ENCODE measurements at regions of chr17 and their contacts with region 1.

Region 1: DNA sequence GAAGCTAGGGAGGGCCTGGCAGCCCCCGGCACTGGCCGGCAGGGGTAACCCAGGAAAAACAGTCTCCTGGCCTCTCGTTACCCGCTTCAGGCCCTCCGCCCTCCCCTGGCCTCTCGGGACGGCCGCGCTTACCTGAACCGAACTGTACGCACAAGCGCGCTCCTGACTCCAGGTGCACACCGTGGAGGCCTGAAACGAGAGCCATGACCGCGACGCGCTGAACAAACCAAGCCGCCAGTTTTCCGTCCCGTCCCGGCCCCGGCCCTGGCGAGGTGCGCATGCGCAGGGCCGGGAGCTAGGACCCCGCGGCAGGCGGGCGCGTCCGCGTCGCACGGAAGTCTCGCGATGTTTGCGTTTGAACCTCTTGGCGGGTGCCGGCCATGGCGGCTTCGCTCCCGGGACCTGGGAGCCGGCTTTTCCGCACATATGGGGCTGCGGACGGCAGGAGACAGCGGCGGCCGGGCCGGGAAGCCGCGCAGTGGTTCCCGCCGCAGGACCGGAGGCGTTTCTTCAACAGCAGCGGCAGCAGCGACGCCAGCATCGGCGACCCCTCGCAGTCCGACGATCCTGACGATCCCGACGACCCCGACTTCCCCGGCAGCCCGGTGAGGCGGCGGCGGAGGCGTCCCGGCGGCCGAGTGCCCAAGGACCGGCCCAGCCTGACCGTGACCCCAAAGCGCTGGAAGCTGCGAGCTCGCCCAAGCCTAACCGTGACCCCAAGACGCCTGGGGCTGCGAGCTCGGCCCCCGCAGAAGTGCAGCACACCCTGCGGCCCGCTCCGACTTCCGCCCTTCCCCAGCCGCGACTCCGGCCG is at the start of gene HASPIN:
- DNase-seq: peak; percentile 84 to 95 (median 90)
- ATAC-seq: peak; percentile 92 to 96
- H3K4me3 Mint-ChIP-seq: peak within 1 kb of the TSS; percentile 80 to 96 (median 92)
- H3K27ac Mint-ChIP-seq: peak within 1 kb of the TSS; percentile 83 to 96 (median 92)
- H3K4me1 Mint-ChIP-seq: peaks cover 17 to 54% (median 41%) of the 10 kb centered on the region in 4 donors
- H3K27me3 Mint-ChIP-seq: no peaks in the 10 kb centered on the region
- polyA plus RNA-seq, gene HASPIN: 0.13 to 0.28 TPM in 2 of 3 donors, not detected in the other

Region 2: GRCh38 chr17:3626831-3627768 is 96.7 kb before region 1 on chr17:
- POLR2A ChIA-PET with region 1: no interaction called
- DNase-seq: no peak
- ATAC-seq: no peak
- H3K4me3 Mint-ChIP-seq: no peak overlapping the region
- H3K27ac Mint-ChIP-seq: no peak overlapping the region
- H3K4me1 Mint-ChIP-seq: peaks cover 0 to 5% (median 2%) of the 10 kb centered on the region in 4 donors
- H3K27me3 Mint-ChIP-seq: no peaks in the 10 kb centered on the region

Region 3: DNA sequence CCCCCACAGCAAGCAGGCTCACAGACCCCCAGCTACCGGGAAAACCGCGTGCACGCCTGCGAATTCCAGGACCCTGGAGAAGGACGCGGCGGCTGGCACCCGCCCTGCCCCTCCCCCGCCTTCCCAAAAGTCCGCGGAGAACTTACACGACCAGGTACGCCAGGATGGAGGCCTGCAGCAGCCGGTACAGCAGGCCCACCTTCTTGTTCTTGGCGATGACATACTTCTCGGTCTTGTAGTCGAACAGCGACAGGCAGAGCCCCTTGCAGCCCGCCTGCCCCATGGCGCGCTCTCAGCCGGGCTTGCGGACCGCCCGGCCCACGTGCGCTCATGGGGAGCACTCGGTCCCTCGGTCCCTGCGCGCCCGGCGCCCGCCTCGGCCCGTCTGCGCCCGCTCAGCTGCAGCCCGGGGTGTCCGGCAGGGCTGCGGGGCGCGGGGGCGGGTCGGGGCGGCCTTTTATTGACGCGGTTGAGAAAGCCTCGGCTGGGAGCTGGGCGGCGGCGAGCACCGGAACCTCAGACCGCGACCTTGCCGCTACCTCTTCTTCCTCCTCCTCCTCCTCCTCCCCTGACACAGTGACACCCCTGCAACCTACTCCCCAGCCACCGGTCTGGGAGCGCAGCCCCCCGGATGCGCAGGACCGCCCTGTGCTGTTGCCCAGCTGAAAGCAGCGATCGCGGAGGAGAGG is 27.9 kb before region 1 on chr17 and contains the start of gene P2RX5:
- POLR2A ChIA-PET with region 1: interaction called, 12 read pairs
- DNase-seq: peak in 9 of 10 donors; percentile 5 to 49 (median 31)
- ATAC-seq: peak; percentile 80 to 84
- H3K4me3 Mint-ChIP-seq: peak within 1 kb of the TSS; percentile 88 to 99 (median 92)
- H3K27ac Mint-ChIP-seq: peak within 1 kb of the TSS; percentile 63 to 97 (median 89)
- H3K4me1 Mint-ChIP-seq: peaks cover 8 to 51% (median 37%) of the 10 kb centered on the region in 4 donors
- H3K27me3 Mint-ChIP-seq: no peaks in the 10 kb centered on the region
- polyA plus RNA-seq, gene P2RX5: 15.6 to 23.6 (median 16.7) TPM

Region 4: GRCh38 chr17:3710951-3711383 is 12.8 kb before region 1 on chr17:
- POLR2A ChIA-PET with region 1: interaction called, 25 read pairs
- DNase-seq: peak in 9 of 10 donors; percentile 66 to 86 (median 74)
- ATAC-seq: peak; percentile 99
- H3K4me3 Mint-ChIP-seq: peak overlapping the region in 9 of 10 donors; percentile 26 to 79 (median 63)
- H3K27ac Mint-ChIP-seq: peak overlapping the region in 9 of 10 donors; percentile 77 to 91 (median 88)
- H3K4me1 Mint-ChIP-seq: peaks cover 14 to 51% (median 37%) of the 10 kb centered on the region in 4 donors
- H3K27me3 Mint-ChIP-seq: no peaks in the 10 kb centered on the region

Region 5: GRCh38 chr17:3870871-3871306 is 147.1 kb after region 1 on chr17:
- POLR2A ChIA-PET with region 1: no interaction called
- DNase-seq: peak in 1 of 10 donors; percentile 32
- ATAC-seq: no peak
- H3K4me3 Mint-ChIP-seq: peak overlapping the region in 4 of 10 donors; percentile 48 to 76 (median 70)
- H3K27ac Mint-ChIP-seq: peak overlapping the region in 9 of 10 donors; percentile 27 to 98 (median 90)
- H3K4me1 Mint-ChIP-seq: peaks cover 5 to 8% (median 6%) of the 10 kb centered on the region in 4 donors
- H3K27me3 Mint-ChIP-seq: no peaks in the 10 kb centered on the region

Measured in naive thymus-derived CD8-positive, alpha-beta T cell (primary cell).